Vagina (tissue), 2 donors: ENCODE measurements at regions of chr6 and their contacts with region 1.

Region 1: DNA sequence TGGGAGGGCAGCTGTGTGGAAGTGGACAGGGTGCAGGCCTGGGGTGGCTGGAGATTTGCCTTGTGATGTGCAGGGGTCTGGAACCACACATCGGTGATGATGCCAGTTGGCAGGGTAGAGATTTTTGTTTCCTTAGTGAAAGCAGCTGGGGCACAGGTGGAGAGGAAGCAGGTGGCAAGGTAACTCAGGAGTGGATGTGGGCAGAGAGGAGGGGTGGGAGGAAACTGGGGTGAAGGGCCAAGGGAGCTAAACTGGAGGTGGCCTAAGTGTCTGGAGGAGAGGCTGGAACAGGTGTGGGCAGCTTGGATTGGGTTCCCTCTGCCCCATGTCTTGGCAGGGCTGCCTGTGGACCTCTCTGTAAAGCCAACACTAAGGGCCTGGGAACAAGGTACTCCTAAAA is 4.7 kb upstream of the SCUBE3 start:
- DNase-seq: no peak
- H3K4me3 ChIP-seq: no peak overlapping the region
- H3K27ac ChIP-seq: no peak overlapping the region
- H3K4me1 ChIP-seq: peaks cover 9% of the 10 kb centered on the region
- H3K27me3 ChIP-seq: no peaks in the 10 kb centered on the region
- CTCF ChIP-seq: no peak
- POLR2A ChIP-seq: no peak

Region 2: DNA sequence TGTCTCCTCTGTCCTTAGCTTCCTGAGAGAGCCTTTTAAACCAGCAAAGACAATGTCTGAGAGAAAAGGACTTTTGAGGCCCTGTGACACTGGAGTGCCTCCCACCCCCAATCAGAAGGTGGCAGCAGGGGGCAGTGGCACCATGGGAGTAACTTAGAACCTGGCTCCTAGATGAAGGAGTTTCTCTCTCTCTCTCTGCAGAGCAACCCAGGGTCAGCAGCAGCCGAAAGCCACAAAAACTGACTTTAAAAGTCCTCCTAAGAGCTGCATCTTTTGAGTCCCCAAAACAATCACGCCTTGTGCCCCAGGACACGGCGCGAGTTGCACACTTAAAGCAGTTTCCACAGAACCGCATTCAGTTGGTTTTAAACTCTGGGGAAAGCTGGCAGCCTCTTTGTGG is 62.6 kb before region 1 on chr6:
- intact Hi-C with region 1: loop called (anchors 5 kb)
- DNase-seq: no peak
- H3K4me3 ChIP-seq: no peak overlapping the region
- H3K27ac ChIP-seq: no peak overlapping the region
- H3K4me1 ChIP-seq: peaks cover under 1% of the 10 kb centered on the region
- H3K27me3 ChIP-seq: no peaks in the 10 kb centered on the region
- CTCF ChIP-seq: peak in 2 of 3 experiments; percentile 21 to 48
- POLR2A ChIP-seq: no peak

Region 3: DNA sequence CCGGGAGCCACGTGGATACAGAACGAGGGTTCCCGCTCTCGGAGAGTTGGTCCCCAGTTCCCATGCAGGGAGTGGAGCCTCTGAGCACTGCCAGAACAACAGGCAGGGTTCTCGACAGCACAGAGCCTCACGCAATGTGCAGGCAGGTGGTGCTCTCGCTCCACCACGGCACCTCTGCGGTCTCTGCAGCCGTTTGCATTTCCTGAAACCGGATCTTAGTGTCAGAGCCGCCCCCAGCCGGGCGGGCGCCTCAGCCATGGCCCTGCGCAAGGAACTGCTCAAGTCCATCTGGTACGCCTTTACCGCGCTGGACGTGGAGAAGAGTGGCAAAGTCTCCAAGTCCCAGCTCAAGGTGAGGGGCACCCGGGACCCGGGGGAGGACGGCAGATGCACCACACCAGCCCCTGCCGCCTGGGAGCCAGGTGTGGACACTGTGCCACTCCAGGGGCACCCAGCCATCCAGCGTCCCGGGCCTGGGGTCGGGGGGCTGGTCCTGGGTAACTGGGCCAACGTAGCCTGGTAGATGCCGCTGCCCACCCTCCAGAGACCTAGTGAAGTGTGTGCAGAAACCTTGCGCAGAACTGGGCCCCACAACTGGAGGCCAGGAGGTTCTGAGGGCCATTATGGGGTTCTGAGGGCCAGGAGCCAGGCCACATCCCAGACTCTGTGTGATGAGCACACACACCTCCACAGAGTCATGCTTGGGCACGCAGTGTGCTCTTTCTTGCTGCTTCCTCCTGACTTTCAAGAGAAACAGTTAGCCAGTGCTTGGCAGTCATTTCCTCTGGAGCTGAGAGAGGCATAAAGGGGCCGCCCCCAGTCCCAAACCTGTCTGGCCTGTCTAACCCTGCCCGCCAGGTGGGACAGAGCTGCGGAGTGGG is 88.8 kb after region 1 on chr6 and contains the start of gene DEF6:
- intact Hi-C with region 1: no loop called
- DNase-seq: no peak
- H3K4me3 ChIP-seq: peak within 1 kb of the TSS; percentile 46 to 49
- H3K27ac ChIP-seq: peak within 1 kb of the TSS; percentile 71
- H3K4me1 ChIP-seq: peaks cover 51% of the 10 kb centered on the region
- H3K27me3 ChIP-seq: no peaks in the 10 kb centered on the region
- CTCF ChIP-seq: peak; percentile 54 to 64 (median 54)
- POLR2A ChIP-seq: no peak
- total RNA-seq, gene DEF6: 23.1 TPM